Activated naive CD4-positive, alpha-beta T cell treated with anti-CD3 and anti-CD28 coated beads for 36 hours (primary cell): ENCODE measurements at regions of chr7 and their contacts with region 1.

Region 1: DNA sequence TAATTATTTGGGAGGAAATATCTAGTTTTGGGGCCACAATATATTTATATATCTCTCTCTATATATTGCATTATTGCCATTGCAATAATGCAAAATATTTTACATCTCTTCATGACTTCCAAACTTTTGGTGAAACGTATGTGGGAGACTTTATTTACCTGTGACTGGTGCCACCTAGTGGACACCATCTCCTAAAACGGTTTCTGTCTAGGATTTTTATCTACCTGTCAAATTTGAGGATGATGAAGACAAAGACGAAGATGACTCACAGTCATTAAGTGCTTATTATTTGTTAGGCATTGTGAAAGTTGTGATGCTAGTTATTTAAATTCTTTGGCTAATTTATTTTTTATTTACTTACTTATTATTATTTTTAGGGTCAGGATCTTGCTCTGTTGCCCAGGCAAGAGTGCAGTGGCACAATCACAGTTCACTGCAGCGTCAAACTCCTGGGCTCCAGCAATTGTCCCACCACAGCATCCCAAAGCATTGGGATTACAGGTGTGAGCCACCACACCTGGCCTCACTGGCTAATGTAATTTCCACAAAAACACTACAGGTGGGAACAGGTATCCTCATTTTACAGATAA is 18.7 kb upstream of the CBLL1 start:
- DNase-seq: peak; percentile 75
- H3K4me3 Mint-ChIP-seq: no peak overlapping the region
- H3K27ac Mint-ChIP-seq: no peak overlapping the region
- H3K4me1 Mint-ChIP-seq: no peaks in the 10 kb centered on the region
- H3K27me3 Mint-ChIP-seq: peaks cover 26% of the 10 kb centered on the region

Region 2: DNA sequence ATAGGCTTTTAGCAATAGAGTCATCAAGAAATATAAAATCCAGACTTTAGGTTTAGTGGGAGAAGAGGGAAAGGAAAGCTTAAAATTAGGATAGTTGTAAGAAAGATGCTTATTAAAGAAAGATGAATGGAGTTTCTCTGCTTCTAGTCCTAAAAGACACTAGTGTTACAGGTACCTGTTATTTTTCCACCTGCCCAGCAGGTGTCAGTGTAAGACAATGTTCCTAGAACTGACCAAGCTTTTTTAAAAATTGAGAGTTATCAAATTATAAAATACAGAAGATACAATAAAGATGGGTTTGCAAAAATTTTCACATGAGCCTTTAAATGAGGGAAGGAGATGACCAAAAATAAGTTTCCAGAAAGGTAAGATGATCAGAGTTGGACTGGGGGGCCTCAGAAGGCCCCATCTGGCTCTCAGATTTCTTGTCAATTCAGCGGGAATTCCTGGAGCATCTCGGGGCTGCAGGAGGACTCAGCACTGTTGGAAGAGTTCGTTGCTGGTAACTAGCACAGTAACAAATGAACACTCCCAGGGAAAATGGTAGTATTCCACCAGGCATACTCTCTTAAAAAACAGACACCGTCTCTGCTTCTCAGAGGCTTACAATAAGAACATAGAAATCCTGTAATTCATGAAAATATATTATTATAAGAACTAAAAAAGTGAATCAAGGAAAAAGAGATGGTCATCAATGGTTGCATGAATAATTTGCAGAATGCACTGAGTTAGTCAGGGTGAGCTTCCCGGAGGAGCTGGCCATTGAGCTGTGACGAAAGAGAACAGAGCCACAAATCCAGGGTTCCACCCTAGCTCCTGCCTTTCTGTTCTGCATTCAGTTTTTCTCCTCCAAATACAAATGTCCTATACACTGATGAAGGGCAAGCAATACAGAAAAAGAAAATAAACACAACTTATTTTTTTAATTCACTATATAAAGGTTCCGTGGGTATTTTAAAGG is 932.0 kb before region 1 on chr7:
- CTCF ChIA-PET with region 1: no interaction called
- intact Hi-C with region 1: loop called (anchors 1 kb)
- DNase-seq: peak; percentile 54
- H3K4me3 Mint-ChIP-seq: no peak overlapping the region
- H3K27ac Mint-ChIP-seq: no peak overlapping the region
- H3K4me1 Mint-ChIP-seq: no peaks in the 10 kb centered on the region
- H3K27me3 Mint-ChIP-seq: no peaks in the 10 kb centered on the region

Region 3: GRCh38 chr7:106947244-106947728 is 778.0 kb before region 1 on chr7:
- CTCF ChIA-PET with region 1: no interaction called
- intact Hi-C with region 1: loop called (anchors 5 kb)
- DNase-seq: peak; percentile 48
- H3K4me3 Mint-ChIP-seq: no peak overlapping the region
- H3K27ac Mint-ChIP-seq: no peak overlapping the region
- H3K4me1 Mint-ChIP-seq: no peaks in the 10 kb centered on the region
- H3K27me3 Mint-ChIP-seq: peaks cover 1% of the 10 kb centered on the region

Region 4: GRCh38 chr7:107201795-107202450 is 523.3 kb before region 1 on chr7:
- CTCF ChIA-PET with region 1: interaction called, 3 read pairs
- intact Hi-C with region 1: loop called (anchors 1 kb)
- DNase-seq: peak; percentile 62
- H3K4me3 Mint-ChIP-seq: no peak overlapping the region
- H3K27ac Mint-ChIP-seq: peak overlapping the region; percentile 56
- H3K4me1 Mint-ChIP-seq: no peaks in the 10 kb centered on the region
- H3K27me3 Mint-ChIP-seq: no peaks in the 10 kb centered on the region

Region 5: DNA sequence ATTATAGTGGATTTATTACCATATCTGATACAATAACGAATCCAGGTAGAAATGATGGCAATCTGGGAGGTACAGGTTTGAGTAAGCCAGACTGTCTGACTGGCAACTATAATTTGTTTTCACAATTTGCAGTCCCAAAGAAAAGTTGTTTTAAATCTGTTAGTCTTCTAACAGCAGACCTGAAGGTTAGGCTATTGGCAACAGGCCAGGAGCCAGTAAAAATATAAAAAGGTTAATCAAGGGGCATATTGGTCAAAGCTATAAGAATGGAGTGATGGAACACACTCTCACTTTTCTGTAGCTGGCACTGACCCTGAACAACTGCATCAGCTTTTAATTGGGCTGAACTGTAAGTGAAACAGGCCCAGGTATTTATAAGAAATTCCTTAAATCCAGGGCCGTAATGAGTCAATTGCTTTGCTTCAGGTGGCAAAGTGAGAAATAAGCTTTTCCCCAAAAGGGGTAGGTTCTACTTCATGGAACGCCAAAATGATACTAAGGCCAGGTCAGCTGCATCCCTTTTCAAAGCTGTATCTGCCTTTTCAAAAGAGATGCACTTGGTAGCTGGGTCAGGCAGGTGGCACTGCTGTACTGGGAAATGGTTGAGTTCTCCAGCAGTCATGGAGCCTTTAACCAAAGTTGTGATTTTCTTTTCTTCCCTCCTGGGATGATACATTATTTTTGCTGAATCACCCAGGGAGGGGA is 262.4 kb before region 1 on chr7:
- CTCF ChIA-PET with region 1: interaction called, 10 read pairs
- intact Hi-C with region 1: loop called (anchors 1 kb)
- DNase-seq: peak; percentile 64
- H3K4me3 Mint-ChIP-seq: no peak overlapping the region
- H3K27ac Mint-ChIP-seq: no peak overlapping the region
- H3K4me1 Mint-ChIP-seq: no peaks in the 10 kb centered on the region
- H3K27me3 Mint-ChIP-seq: no peaks in the 10 kb centered on the region

Region 6: GRCh38 chr7:107579885-107580715 is 145.1 kb before region 1 on chr7 and contains the start of gene BCAP29:
- CTCF ChIA-PET with region 1: no interaction called
- intact Hi-C with region 1: loop called (anchors 1 kb)
- DNase-seq: peak; percentile 64
- H3K4me3 Mint-ChIP-seq: peak within 1 kb of the TSS; percentile 85
- H3K27ac Mint-ChIP-seq: peak within 1 kb of the TSS; percentile 71
- H3K4me1 Mint-ChIP-seq: peaks cover 21% of the 10 kb centered on the region
- H3K27me3 Mint-ChIP-seq: no peaks in the 10 kb centered on the region
- total RNA-seq, gene BCAP29: 18.9 to 21.0 TPM